Cardiac septum (tissue), 1 donor: ENCODE measurements at regions of chr22 and their contacts with region 1.

Region 1: GRCh38 chr22:43385770-43386641 is 25.8 kb upstream of the MPPED1 start:
- DNase-seq: peak; percentile 87

Region 2: GRCh38 chr22:43230971-43231723 is 154.9 kb before region 1 on chr22:
- intact Hi-C with region 1: loop called (anchors 2 kb)
- DNase-seq: no peak

Region 3: DNA sequence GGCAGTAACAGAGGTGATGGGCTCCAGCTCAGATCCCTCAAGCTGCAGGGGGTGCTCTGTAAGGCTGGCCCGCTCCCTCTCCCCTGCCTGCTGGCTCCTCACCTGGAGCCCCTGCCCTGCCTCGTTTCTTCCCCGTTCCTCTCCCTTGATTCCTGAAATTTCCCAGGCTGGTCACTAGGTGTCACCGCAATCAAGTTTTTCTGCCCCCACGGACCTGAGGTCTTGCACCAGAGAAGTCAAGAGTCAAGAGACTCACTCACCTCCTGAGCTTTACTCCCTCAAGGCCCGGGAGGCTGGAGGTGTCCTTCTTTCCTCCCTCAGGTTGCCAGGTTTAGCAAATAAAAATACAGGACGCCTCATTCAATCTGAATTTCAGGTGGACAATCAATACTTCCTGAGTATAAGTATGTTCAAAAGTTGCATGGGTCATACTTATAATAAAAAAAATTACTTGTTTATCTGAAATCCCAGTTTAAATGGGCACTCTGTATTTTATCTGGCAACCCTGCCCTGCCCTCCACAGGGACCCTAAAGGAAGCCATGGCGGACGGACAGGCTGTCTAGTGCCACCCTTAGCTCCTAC is 112.0 kb before region 1 on chr22:
- intact Hi-C with region 1: loop called (anchors 2 kb)
- DNase-seq: no peak

Region 4: GRCh38 chr22:43796567-43796966 is 410.6 kb after region 1 on chr22:
- intact Hi-C with region 1: loop called (anchors 10 kb)
- DNase-seq: no peak

Region 5: DNA sequence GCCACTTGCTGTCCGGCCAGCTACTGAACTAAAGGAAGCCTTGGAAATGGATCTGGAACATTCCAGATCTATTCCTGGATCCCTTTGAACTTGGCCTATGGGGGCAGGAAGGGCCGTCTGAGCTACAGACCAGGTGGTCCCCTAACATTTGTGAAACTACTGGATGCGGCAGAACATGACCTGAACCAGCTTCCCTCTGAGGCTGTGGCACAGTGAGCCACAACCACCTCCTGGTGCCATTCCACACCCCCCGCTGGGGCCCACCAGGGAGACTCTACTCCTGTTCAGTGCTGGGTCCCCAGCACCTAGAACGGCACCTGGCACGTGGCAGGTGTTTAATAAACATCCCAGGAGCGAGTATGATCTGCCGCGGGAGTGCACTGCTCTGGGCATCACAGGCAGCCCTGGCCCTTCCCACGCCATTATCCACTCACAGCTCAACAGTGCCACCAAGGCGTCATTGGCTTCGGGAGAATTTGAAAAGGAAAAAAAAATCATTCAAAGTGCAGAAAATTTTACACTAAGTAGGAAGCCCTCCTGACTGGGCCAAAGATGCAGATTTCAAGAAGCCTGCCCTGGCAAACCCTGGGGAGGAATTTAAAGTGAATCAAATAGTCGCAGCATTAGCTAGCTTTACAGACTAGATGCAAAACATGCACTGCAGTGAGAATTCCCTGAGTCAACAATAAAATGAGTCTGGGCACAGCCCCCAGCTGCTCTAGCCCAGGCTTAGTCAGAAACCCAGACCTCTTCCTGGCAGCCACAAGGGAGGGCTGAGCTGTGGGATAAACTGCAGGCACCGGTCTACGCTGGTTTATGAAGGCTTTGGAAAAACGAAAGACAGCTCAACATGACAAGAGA is 440.4 kb after region 1 on chr22:
- intact Hi-C with region 1: loop called (anchors 10 kb)
- DNase-seq: peak; percentile 50

Region 6: DNA sequence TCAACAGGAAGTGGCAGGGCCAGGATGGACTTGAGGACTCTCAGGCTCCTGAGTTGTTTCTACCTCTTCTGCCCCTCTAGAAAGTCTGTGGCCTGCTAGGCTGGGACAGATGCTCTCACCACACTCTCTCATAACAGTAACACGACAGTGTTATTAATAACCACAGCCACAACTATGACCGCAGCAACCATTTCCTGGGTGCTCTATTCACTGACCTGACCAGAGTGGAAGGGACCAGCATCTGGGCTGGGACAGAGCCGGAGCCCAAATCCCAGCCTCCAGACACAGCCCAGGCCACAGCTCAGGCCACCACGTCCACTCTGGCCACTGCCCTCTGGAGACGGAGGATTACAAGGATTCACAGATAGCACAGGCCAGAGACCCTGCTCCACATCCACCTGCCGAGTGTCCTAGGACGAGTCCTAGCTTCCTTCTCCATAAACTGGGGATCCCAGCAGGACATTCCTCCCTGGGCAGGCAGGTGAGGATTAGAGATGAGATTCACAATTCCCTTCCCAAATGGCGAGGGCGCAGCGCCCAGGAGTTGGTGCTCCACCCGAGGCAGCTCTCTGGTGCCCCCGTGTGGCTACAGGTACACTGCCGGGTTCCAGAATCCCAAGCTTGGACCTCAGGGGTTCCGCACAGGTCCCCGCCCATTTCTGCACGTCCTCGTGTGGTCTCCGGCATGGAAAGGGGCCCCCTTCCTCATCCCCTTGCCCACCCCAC is 498.8 kb after region 1 on chr22:
- intact Hi-C with region 1: loop called (anchors 10 kb)
- DNase-seq: peak; percentile 76